ENCODE measurements at regions of chr12 and their contacts with region 1.

Region 1: GRCh38 chr12:122974274-122974891 is 661 bp upstream of the OGFOD2 start:
- DNase-seq: peak; percentile 100
- H3K4me3 Mint-ChIP-seq: peak overlapping the region; percentile 90
- H3K27ac Mint-ChIP-seq: peak overlapping the region; percentile 100
- H3K4me1 Mint-ChIP-seq: peaks cover 33% of the 10 kb centered on the region
- H3K27me3 Mint-ChIP-seq: no peaks in the 10 kb centered on the region

Region 2: GRCh38 chr12:122946690-122947341 is 27.6 kb before region 1 on chr12:
- CTCF ChIA-PET with region 1: interaction called, 3 read pairs
- intact Hi-C with region 1: loop called (anchors 1 kb)
- DNase-seq: peak; percentile 96
- H3K4me3 Mint-ChIP-seq: no peak overlapping the region
- H3K27ac Mint-ChIP-seq: peak overlapping the region; percentile 83
- H3K4me1 Mint-ChIP-seq: peaks cover 17% of the 10 kb centered on the region
- H3K27me3 Mint-ChIP-seq: no peaks in the 10 kb centered on the region

Region 3: DNA sequence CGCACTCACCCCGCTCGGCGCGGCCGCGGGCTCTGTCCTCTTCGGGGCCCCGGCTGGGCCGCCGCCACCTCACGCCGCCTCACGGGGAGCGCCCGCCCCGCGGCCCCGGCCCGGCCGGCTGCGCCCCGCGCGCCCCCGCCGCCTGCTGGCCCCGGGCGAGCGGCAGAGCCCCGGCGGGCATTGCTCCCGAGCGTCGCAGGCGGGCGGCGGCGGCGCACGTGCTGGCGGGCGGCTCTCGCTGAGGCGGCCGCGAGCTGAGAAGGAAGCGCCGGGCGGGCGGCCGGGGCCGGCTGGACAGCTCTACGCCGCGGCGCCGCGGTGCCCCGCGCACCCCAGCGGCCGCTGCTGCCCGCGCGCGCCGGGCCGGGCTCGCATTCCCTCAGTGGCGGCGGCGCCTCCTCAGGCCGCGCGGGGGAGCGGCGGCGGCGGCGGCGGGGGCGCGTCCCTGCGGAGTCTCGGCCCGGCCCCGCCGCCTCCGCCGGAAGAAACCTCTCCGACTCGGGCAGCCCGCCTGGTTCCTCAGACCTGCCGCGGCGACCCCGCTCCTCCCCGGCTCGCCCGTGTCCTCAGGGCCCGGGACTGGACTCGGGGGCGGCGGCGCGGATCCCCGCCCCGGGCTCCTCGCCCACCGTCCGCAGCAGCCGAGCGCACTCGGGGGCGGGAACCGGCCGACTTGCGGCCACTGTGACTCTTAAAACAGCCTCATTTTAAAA is 176.5 kb after region 1 on chr12 and contains the start of gene PITPNM2:
- CTCF ChIA-PET with region 1: no interaction called
- intact Hi-C with region 1: loop called (anchors 2 kb)
- DNase-seq: peak; percentile 63
- H3K4me3 Mint-ChIP-seq: peak within 1 kb of the TSS; percentile 77
- H3K27ac Mint-ChIP-seq: peak within 1 kb of the TSS; percentile 75
- H3K4me1 Mint-ChIP-seq: peaks cover 29% of the 10 kb centered on the region
- H3K27me3 Mint-ChIP-seq: no peaks in the 10 kb centered on the region
- total RNA-seq, gene PITPNM2: 15.4 TPM

Region 4: DNA sequence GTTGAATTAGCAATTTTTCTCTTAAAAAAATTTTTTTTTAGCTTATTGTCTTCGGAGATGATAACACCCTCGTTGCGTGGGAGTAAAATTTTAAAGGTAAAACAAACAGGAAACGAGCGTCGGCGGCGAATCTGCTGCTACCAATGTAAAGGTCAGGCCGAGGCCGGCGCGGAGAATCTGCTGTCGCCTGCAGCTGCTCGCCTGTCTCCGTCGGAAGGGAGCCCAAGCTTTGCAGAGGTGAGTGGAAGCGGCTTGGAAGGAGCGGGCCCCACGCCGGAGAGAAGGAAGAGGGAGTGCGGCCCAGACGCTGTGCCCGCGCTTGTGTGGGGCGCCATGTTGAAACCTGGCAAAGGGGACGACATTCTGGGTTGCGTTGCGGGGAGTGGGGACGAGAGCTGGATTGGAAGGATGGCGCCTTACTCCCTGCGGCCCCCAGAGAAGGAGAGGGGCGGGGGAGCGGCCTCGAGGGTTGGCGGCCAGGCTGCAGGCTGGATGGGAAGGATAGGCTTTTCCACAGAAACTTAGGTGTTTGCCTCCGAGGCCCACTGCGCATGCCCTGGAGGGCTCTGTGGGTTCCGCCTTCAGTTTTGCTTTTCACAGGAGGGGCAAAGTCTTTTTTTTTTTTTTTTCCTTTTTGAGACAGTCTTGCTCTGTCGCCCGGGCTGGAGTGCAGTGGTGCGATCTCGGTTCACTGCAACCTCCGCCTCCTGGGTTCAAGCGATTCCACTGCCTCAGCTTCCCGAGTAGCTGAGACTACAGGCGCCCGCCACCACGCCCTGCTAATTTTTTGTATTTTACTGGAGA is 483.8 kb after region 1 on chr12 and contains the start of gene SNRNP35:
- CTCF ChIA-PET with region 1: no interaction called
- intact Hi-C with region 1: loop called (anchors 1 kb)
- DNase-seq: peak; percentile 83
- H3K4me3 Mint-ChIP-seq: peak within 1 kb of the TSS; percentile 97
- H3K27ac Mint-ChIP-seq: peak within 1 kb of the TSS; percentile 100
- H3K4me1 Mint-ChIP-seq: peaks cover 25% of the 10 kb centered on the region
- H3K27me3 Mint-ChIP-seq: no peaks in the 10 kb centered on the region
- total RNA-seq, gene SNRNP35: 21.5 to 21.8 TPM

Measured in activated naive CD4-positive, alpha-beta T cell treated with anti-CD3 and anti-CD28 coated beads for 36 hours (primary cell).